CD4-positive, alpha-beta T cell (primary cell): ENCODE measurements at regions of chr11 and their contacts with region 1.

Region 1: DNA sequence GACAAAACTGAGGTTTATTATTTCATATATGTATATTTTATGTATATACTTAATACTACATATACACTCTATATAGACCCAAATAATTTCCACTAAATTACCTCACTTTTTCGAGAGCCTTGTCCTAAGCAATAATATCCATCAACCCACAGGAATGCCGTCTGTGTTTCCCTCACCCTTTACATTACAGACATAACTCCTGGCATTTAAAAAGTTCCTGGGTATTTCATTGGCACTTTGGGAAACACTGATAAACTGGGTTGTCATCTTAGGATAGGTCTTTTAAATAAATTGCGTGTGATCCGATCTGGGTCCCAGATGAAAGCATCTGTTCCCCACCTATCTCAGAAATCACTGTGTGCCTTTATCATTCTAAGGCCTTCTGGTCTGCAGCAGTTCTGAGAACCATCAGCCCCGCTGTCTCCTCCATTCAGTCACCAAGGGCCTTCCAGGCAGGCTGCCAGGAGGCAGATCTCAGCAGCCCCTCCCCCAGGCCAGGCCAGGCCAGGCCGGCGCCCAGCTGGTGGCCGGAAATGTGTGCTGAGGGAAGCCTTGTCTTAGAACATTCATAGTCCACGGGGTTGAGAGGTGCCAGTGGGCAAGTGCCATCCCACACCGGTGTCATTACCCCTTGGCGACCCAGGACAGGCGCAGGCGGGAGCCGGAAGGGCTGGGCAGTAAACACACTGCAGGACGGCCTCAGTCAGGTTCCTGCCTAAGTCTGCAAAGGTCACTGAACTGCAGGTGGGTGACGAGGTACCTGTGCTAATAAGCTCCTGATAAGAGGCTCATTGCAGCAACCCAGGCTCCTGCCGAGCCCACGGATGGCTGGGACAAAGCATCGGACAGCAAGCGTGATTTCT is 3.3 kb downstream of the FGF19 start:
- DNase-seq: no peak
- ATAC-seq: no peak
- H3K4me3 ChIP-seq: no peak overlapping the region
- H3K4me3 Mint-ChIP-seq: no peak overlapping the region
- H3K27ac ChIP-seq: no peak overlapping the region
- H3K27ac Mint-ChIP-seq: no peak overlapping the region
- H3K4me1 ChIP-seq: peaks cover 11% of the 10 kb centered on the region
- H3K4me1 Mint-ChIP-seq: no peaks in the 10 kb centered on the region
- H3K27me3 ChIP-seq: peaks cover 58 to 78% of the 10 kb centered on the region in 2 experiments
- H3K27me3 Mint-ChIP-seq: peaks cover 71% of the 10 kb centered on the region
- CTCF ChIP-seq: no peak

Region 2: DNA sequence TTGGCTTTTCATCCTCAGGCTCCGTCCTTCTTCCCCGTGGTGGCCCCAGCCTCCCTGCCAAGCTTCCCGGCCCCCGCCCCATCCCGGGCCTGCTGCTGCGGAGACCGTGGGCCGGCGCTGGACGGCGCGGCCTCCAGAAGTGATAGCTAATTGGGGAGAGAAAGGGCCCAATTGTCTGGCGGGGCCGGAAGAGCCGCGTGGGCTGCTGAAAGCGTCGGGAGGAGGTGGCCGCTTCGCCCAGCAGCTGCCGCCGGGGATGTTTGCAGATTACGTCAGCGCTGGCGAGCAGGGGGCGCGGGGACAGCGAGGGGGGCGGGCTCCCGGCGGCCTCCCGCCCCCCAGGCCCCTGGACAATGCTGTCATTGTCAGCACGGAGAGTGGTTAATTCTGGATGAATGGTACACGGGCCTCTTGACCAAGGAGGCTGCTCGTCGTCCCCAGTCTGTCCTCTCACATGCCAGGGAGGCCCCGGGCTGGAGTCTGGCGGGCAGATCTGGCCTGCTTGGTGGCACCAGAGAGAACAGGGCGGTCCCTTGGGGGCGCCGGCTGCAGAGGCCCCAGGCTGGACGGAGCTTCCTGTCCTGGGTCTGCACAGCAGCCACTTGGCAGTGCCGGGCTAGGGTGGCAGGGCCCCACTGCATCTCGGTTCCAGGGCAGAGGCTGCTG is 543.2 kb before region 1 on chr11:
- CTCF ChIA-PET with region 1: no interaction called
- POLR2A ChIA-PET with region 1: no interaction called
- intact Hi-C with region 1: no loop called
- DNase-seq: no peak
- ATAC-seq: no peak
- H3K4me3 ChIP-seq: no peak overlapping the region
- H3K4me3 Mint-ChIP-seq: no peak overlapping the region
- H3K27ac ChIP-seq: no peak overlapping the region
- H3K27ac Mint-ChIP-seq: no peak overlapping the region
- H3K4me1 ChIP-seq: peaks cover 14% of the 10 kb centered on the region
- H3K4me1 Mint-ChIP-seq: no peaks in the 10 kb centered on the region
- H3K27me3 ChIP-seq: peaks cover 4 to 9% of the 10 kb centered on the region in 2 experiments
- H3K27me3 Mint-ChIP-seq: peaks cover 9% of the 10 kb centered on the region
- CTCF ChIP-seq: no peak

Region 3: DNA sequence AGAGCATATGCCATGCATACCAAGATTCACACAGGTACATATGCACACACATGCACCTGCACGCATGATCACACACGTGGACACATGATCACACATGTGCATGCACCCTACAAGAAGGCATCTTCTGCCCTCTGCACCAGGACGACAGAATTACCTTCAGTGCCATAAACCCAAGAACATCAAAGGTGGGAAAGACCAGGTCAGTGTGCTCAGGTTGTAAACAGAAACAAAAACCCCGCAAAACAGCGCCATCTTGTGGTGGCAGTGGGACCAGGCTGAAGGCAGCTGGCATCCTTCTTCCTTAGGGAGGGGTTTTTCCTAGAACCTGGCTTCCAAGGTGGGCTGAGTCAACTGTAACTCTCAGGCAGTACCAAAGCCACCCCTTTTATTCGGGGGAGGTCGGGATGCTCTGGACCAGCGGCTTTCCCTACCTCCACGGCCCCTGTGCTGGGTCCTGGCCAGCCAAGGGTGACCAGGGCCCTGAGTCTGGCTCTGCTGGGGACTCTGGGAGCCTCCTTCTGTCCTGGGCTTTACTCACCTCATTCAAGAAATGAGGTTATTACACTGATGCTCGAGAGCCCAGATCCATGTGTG is 188.1 kb after region 1 on chr11:
- CTCF ChIA-PET with region 1: no interaction called
- POLR2A ChIA-PET with region 1: no interaction called
- intact Hi-C with region 1: loop called in 1 of 2 experiments (anchors 5 kb)
- DNase-seq: peak; percentile 43 to 79 (median 58)
- ATAC-seq: peak; percentile 46
- H3K4me3 ChIP-seq: no peak overlapping the region
- H3K4me3 Mint-ChIP-seq: no peak overlapping the region
- H3K27ac ChIP-seq: no peak overlapping the region
- H3K27ac Mint-ChIP-seq: no peak overlapping the region
- H3K4me1 ChIP-seq: peaks cover 5% of the 10 kb centered on the region
- H3K4me1 Mint-ChIP-seq: peaks cover 3% of the 10 kb centered on the region
- H3K27me3 ChIP-seq: peaks cover 15 to 24% of the 10 kb centered on the region in 2 experiments
- H3K27me3 Mint-ChIP-seq: peaks cover 53% of the 10 kb centered on the region
- CTCF ChIP-seq: peak; percentile 91